Caco-2 (cell line): ENCODE measurements at regions of chr13 and their contacts with region 1.

Region 1: GRCh38 chr13:93270769-93271742 is 44.4 kb downstream of the GPC6 start:
- DNase-seq: peak in 1 of 2 experiments; percentile 23
- H3K4me3 ChIP-seq: no peak overlapping the region
- H3K4me3 Mint-ChIP-seq: peak overlapping the region; percentile 26
- H3K27ac Mint-ChIP-seq: peak overlapping the region; percentile 37
- H3K4me1 ChIP-seq: peaks cover 21% of the 10 kb centered on the region
- H3K4me1 Mint-ChIP-seq: no peaks in the 10 kb centered on the region
- H3K27me3 ChIP-seq: no peaks in the 10 kb centered on the region
- H3K27me3 Mint-ChIP-seq: no peaks in the 10 kb centered on the region
- CTCF ChIP-seq: no peak

Region 2: GRCh38 chr13:93190006-93190405 is 81.0 kb before region 1 on chr13:
- CTCF ChIA-PET with region 1: no interaction called
- POLR2A ChIA-PET with region 1: no interaction called
- intact Hi-C with region 1: no loop called
- DNase-seq: no peak
- H3K4me3 ChIP-seq: no peak overlapping the region
- H3K4me3 Mint-ChIP-seq: no peak overlapping the region
- H3K27ac Mint-ChIP-seq: no peak overlapping the region
- H3K4me1 ChIP-seq: no peaks in the 10 kb centered on the region
- H3K4me1 Mint-ChIP-seq: no peaks in the 10 kb centered on the region
- H3K27me3 ChIP-seq: no peaks in the 10 kb centered on the region
- H3K27me3 Mint-ChIP-seq: no peaks in the 10 kb centered on the region
- CTCF ChIP-seq: no peak

Region 3: GRCh38 chr13:93224535-93224934 is 46.5 kb before region 1 on chr13:
- CTCF ChIA-PET with region 1: no interaction called
- POLR2A ChIA-PET with region 1: no interaction called
- intact Hi-C with region 1: loop called (anchors 1 kb)
- DNase-seq: peak; percentile 72 to 80
- H3K4me3 ChIP-seq: no peak overlapping the region
- H3K4me3 Mint-ChIP-seq: peak overlapping the region; percentile 15
- H3K27ac Mint-ChIP-seq: peak overlapping the region; percentile 76
- H3K4me1 ChIP-seq: peaks cover 31% of the 10 kb centered on the region
- H3K4me1 Mint-ChIP-seq: peaks cover 38% of the 10 kb centered on the region
- H3K27me3 ChIP-seq: no peaks in the 10 kb centered on the region
- H3K27me3 Mint-ChIP-seq: no peaks in the 10 kb centered on the region
- CTCF ChIP-seq: no peak

Region 4: GRCh38 chr13:93480553-93481106 is 209.6 kb after region 1 on chr13:
- CTCF ChIA-PET with region 1: no interaction called
- POLR2A ChIA-PET with region 1: no interaction called
- intact Hi-C with region 1: no loop called
- DNase-seq: no peak
- H3K4me3 ChIP-seq: no peak overlapping the region
- H3K4me3 Mint-ChIP-seq: no peak overlapping the region
- H3K27ac Mint-ChIP-seq: no peak overlapping the region
- H3K4me1 ChIP-seq: no peaks in the 10 kb centered on the region
- H3K4me1 Mint-ChIP-seq: no peaks in the 10 kb centered on the region
- H3K27me3 ChIP-seq: no peaks in the 10 kb centered on the region
- H3K27me3 Mint-ChIP-seq: no peaks in the 10 kb centered on the region
- CTCF ChIP-seq: no peak